ENCODE measurements at regions of chr12 and their contacts with region 1.

Region 1: DNA sequence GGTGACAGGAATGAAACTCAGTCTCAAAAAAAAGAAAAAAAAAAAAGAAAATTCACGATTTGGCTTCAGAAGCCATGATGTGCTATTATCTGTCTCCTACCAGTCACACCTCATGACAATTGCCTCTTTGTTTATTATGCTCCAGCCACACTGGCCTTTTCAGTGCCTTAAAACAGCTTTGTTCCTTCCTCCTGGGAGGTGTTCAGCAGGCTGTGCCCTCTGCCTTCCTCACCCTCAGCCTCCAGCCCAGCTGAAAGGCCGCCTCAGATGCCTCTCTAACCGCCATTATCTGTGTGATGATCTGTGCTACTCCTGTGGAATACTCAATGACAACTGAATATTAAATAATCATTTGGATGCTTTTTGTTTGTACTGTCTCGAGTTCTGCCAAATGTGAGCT is 8.6 kb upstream of the ARPC3 start:
- DNase-seq: no peak
- ATAC-seq: no peak
- H3K4me3 ChIP-seq: no peak overlapping the region
- H3K27ac ChIP-seq: no peak overlapping the region
- H3K4me1 ChIP-seq: no peaks in the 10 kb centered on the region
- H3K27me3 ChIP-seq: no peaks in the 10 kb centered on the region
- CTCF ChIP-seq: no peak

Region 2: GRCh38 chr12:110338754-110339153 is 120.0 kb before region 1 on chr12:
- CTCF ChIA-PET with region 1: no interaction called
- POLR2A ChIA-PET with region 1: no interaction called
- in situ Hi-C with region 1: no loop called
- intact Hi-C with region 1: no loop called
- DNase-seq: no peak
- ATAC-seq: 0 out of 2 replicates have a peak, but pooled peaks have one; percentile 43
- H3K4me3 ChIP-seq: no peak overlapping the region
- H3K27ac ChIP-seq: no peak overlapping the region
- H3K4me1 ChIP-seq: no peaks in the 10 kb centered on the region
- H3K27me3 ChIP-seq: no peaks in the 10 kb centered on the region
- CTCF ChIP-seq: no peak

Region 3: GRCh38 chr12:110555577-110556406 is 97.0 kb after region 1 on chr12:
- CTCF ChIA-PET with region 1: no interaction called
- POLR2A ChIA-PET with region 1: no interaction called
- in situ Hi-C with region 1: no loop called
- intact Hi-C with region 1: no loop called
- DNase-seq: no peak
- ATAC-seq: no peak
- H3K4me3 ChIP-seq: no peak overlapping the region
- H3K27ac ChIP-seq: no peak overlapping the region
- H3K4me1 ChIP-seq: no peaks in the 10 kb centered on the region
- H3K27me3 ChIP-seq: no peaks in the 10 kb centered on the region
- CTCF ChIP-seq: no peak

Region 4: DNA sequence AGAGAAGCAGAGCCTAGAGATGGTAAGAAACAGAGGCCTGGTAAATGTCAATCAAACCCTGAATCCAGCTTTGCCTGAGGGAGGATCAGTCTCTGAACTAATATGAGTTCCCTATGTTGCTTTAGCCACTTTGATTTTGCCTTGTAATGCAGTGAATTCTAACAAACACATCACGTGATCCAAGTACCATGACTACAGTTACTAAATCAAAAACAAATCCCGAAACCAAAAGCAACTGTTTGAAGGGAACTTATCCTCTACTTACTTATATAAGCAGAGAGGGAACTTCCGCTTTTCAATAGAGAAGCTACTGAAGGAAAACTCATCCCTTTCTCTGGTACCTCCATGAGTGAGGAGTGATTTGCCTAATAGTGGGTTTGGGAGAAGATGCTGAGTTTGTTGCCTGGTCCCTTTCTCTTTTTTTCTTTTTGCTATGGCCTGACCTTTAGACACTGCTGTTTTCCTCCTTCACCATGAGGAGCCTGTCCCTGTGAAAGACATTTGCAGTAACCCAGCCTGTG is 132.1 kb after region 1 on chr12:
- CTCF ChIA-PET with region 1: no interaction called
- POLR2A ChIA-PET with region 1: interaction called, 18 read pairs
- in situ Hi-C with region 1: no loop called
- intact Hi-C with region 1: no loop called
- DNase-seq: no peak
- ATAC-seq: no peak
- H3K4me3 ChIP-seq: no peak overlapping the region
- H3K27ac ChIP-seq: no peak overlapping the region
- H3K4me1 ChIP-seq: no peaks in the 10 kb centered on the region; the same call in 1 of the 2 replicates
- H3K27me3 ChIP-seq: no peaks in the 10 kb centered on the region
- CTCF ChIP-seq: no peak